Panc1 (cell line): ENCODE measurements at regions of chr16 and their contacts with region 1.

Region 1: GRCh38 chr16:52446080-52446479 is 100.9 kb downstream of the TOX3 start:
- DNase-seq: no peak
- ATAC-seq: no peak
- H3K4me3 ChIP-seq: no peak overlapping the region
- H3K27ac ChIP-seq: no peak overlapping the region
- H3K4me1 ChIP-seq: no peaks in the 10 kb centered on the region
- H3K27me3 ChIP-seq: no peaks in the 10 kb centered on the region
- CTCF ChIP-seq: no peak

Region 2: DNA sequence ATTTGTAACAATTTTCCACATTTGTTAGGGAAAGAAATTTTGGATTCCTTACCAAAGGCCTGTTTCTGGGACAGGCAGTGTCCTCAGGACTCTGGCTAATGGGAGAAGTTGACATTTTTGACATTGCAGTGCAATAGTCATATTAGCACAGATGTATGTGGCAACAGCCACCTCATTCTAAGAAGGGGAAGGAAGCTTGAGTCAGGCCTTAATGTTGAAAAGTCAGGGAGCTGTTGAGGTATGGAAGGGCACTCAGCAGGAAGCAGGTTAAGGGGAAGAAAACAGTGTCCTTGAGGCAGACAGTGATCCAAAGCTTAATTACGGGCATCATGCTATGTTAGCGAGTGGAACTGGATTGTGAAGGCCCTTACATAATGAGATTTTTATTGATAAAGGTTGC is 1036.0 kb after region 1 on chr16:
- CTCF ChIA-PET with region 1: no interaction called
- POLR2A ChIA-PET with region 1: interaction called, 11 read pairs
- in situ Hi-C with region 1: no loop called
- intact Hi-C with region 1: no loop called
- DNase-seq: no peak
- ATAC-seq: no peak
- H3K4me3 ChIP-seq: no peak overlapping the region
- H3K27ac ChIP-seq: no peak overlapping the region
- H3K4me1 ChIP-seq: no peaks in the 10 kb centered on the region
- H3K27me3 ChIP-seq: no peaks in the 10 kb centered on the region
- CTCF ChIP-seq: no peak